Naive thymus-derived CD4-positive, alpha-beta T cell (primary cell): ENCODE measurements at regions of chr6 and their contacts with region 1.

Region 1: GRCh38 chr6:104940881-104941728 is 15.8 kb upstream of the LIN28B start:
- DNase-seq: peak in 5 of 9 donors; percentile 8 to 47 (median 20)
- ATAC-seq: peak; percentile 73
- H3K4me3 ChIP-seq: no peak overlapping the region
- H3K4me3 Mint-ChIP-seq: peak overlapping the region in 9 of 10 donors; percentile 57 to 71 (median 65)
- H3K27ac ChIP-seq: no peak overlapping the region
- H3K27ac Mint-ChIP-seq: no peak overlapping the region
- H3K4me1 ChIP-seq: no peaks in the 10 kb centered on the region
- H3K4me1 Mint-ChIP-seq: peaks cover 0 to 16% (median 7%) of the 10 kb centered on the region in 7 donors
- H3K27me3 ChIP-seq: peaks cover 6 to 28% of the 10 kb centered on the region in 2 donors
- H3K27me3 Mint-ChIP-seq: peaks cover 41 to 56% (median 50%) of the 10 kb centered on the region in 5 donors

Region 2: DNA sequence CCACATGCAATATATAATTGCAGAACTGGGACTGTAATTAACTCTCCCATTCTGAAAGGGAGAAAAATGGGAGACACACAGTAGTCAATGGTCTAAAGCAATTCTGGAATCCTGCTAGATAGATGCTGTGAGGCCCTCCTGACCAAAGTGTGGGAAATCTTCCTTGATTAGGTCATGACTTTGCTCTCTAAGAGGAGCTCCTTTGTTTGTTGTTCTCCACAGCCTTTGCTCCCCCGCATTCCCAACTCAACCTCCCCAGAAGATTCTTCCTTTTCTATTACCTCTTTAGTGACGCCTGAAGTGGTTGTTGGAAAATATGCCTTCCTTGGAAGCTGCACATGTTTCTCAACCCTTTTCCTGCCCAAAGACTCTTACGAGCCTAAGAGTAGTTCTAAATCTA is 13.0 kb before region 1 on chr6:
- CTCF ChIA-PET with region 1: no interaction called
- POLR2A ChIA-PET with region 1: no interaction called
- intact Hi-C with region 1: no loop called
- DNase-seq: no peak
- ATAC-seq: no peak
- H3K4me3 ChIP-seq: no peak overlapping the region
- H3K4me3 Mint-ChIP-seq: no peak overlapping the region
- H3K27ac ChIP-seq: no peak overlapping the region
- H3K27ac Mint-ChIP-seq: no peak overlapping the region
- H3K4me1 ChIP-seq: no peaks in the 10 kb centered on the region
- H3K4me1 Mint-ChIP-seq: no peaks in the 10 kb centered on the region
- H3K27me3 ChIP-seq: peaks cover 0 to 4% of the 10 kb centered on the region in 2 donors
- H3K27me3 Mint-ChIP-seq: peaks cover 10 to 27% (median 14%) of the 10 kb centered on the region in 5 donors

Region 3: DNA sequence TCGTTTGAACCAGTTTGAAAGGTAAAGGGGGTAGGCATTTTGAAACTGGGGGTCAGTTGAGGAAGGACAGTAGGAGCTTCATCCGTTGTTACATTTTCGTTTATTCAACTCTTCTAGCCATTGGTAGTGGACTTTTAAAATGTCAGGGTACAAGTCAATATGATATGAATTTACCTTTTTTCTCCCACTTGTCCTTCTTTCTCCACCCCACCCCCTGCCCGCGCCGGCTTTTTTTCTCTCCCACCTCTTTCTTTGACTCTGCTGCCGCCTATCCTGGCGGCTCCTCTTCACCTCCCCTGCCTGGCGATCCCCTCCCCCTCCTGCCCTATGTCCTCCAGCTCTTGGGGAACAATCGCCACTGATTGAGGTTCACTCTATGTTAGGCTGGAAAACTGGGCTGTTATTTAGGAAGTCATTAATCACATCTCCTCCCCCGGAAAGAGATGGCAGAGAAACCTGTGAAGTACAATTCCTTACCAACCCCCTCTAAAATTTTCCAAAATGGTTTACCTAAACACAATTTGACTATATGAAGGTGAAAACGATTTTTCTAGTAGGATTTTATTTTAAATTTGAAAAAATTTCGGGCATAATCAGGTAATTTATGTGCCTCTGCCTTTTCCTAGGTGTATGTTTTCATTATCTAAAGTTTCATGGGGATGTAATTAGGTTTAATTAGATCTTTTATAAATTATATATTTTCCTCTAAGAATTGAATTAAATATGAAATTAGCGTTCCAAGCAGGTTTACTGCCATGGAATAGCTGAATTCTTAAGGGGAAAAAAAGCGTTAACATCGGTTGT is 15.0 kb after region 1 on chr6:
- CTCF ChIA-PET with region 1: no interaction called
- POLR2A ChIA-PET with region 1: no interaction called
- intact Hi-C with region 1: loop called in 1 of 2 experiments (anchors 2 kb)
- DNase-seq: no peak
- ATAC-seq: no peak
- H3K4me3 ChIP-seq: no peak overlapping the region
- H3K4me3 Mint-ChIP-seq: no peak overlapping the region
- H3K27ac ChIP-seq: no peak overlapping the region
- H3K27ac Mint-ChIP-seq: no peak overlapping the region
- H3K4me1 ChIP-seq: no peaks in the 10 kb centered on the region
- H3K4me1 Mint-ChIP-seq: peaks cover 0 to 29% (median 10%) of the 10 kb centered on the region in 7 donors
- H3K27me3 ChIP-seq: peaks cover 19% of the 10 kb centered on the region in 2 donors
- H3K27me3 Mint-ChIP-seq: peaks cover 76 to 87% (median 84%) of the 10 kb centered on the region in 5 donors